A673 (cell line): ENCODE measurements at regions of chr3 and their contacts with region 1.

Region 1: GRCh38 chr3:184005941-184006507 is 11.7 kb downstream of the ABCC5 start:
- DNase-seq: peak; percentile 62
- H3K4me3 ChIP-seq: no peak overlapping the region
- H3K27ac ChIP-seq: peak overlapping the region; percentile 14
- H3K4me1 ChIP-seq: peaks cover 14% of the 10 kb centered on the region
- H3K27me3 ChIP-seq: no peaks in the 10 kb centered on the region
- CTCF ChIP-seq: no peak

Region 2: DNA sequence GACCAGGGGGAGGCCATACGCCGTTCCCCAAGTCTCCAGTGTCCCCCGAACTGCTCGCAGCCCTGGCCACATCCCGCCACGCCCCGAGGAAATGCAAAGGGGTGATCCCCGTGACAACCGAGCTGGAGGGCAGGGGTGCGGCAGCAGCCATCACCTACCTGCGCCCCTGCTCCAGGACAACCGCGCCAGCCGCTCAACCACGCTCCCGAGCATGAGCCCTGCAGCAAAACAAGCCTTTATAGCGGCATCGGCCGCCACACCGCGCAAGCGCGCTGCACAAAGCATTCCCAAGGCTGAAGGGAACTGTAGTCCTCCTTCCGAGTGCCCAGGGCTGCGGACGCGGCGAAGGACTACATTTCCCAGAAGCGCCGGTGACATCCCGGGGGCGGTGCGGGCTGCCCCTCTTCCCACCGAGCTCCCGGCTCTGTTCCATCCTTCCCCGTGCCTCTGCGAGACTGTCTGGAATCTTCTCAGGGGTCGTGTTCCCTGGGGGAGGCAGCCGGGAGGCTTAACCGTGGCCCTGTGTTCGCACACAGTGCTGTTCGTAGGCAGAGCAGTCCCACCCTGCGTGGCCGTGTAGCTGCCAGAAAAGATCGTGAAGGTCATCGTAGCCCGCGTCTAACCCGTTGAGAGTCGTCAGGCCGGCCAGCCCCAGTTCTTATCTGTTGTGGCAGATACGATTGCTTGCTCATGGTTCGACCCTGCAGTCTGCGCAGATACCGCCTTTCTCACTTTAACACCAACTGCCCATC is 11.8 kb after region 1 on chr3 and contains the start of gene ABCC5:
- CTCF ChIA-PET with region 1: interaction called, 10 read pairs
- POLR2A ChIA-PET with region 1: no interaction called
- intact Hi-C with region 1: no loop called
- DNase-seq: peak; percentile 96
- H3K4me3 ChIP-seq: peak within 1 kb of the TSS; percentile 98
- H3K27ac ChIP-seq: peak within 1 kb of the TSS; percentile 56
- H3K4me1 ChIP-seq: peaks cover 10% of the 10 kb centered on the region
- H3K27me3 ChIP-seq: no peaks in the 10 kb centered on the region
- CTCF ChIP-seq: no peak
- total RNA-seq, gene ABCC5: 30.3 and 32.0 TPM in 2 replicates

Region 3: GRCh38 chr3:184171562-184172287 is 165.7 kb after region 1 on chr3:
- CTCF ChIA-PET with region 1: no interaction called
- POLR2A ChIA-PET with region 1: no interaction called
- intact Hi-C with region 1: no loop called
- DNase-seq: peak; percentile 35
- H3K4me3 ChIP-seq: no peak overlapping the region
- H3K27ac ChIP-seq: no peak overlapping the region
- H3K4me1 ChIP-seq: peaks cover 2% of the 10 kb centered on the region
- H3K27me3 ChIP-seq: no peaks in the 10 kb centered on the region
- CTCF ChIP-seq: no peak